ENCODE measurements at regions of chr19 and their contacts with region 1.

Region 1: DNA sequence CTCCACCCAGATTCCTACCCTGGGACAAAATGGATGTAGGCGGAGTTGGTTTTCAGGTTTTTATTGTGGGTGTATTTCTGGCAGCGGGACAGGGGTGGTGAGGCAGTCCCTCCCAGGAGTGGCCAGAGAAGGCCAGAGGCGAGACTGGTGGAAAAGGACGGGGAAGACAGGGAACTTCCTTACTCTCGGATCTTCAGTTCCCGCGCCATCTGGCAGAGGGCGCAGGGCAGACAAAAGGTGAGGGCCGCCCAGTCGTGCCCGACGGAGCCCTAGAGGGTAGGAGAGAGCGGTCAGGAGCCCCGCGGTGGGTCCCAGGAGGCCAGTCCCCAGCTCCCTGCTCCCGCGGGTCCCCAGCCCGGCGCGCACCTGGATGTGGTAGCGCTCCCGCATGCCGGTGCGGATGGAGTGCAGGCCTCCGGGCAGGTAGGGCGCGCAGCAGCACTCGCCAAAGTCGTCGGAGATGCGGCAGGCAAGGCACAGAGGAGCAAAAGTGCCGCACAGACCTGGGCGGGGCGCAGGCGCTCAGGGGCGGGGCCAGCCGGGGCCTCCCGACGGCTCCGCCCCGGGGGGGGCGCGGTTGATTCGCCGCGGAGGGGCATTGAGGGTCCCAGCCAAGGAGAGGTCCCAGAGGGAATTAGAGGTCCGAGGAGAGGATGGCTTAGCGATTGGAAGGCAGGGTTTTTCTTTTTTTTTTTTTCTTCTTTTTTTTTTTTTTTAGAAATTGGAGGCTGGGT is 3.0 kb downstream of the CNFN start:
- DNase-seq: peak; percentile 39 to 76 (median 69)
- ATAC-seq: peak; percentile 97
- H3K4me3 ChIP-seq: peak overlapping the region; percentile 31 to 58
- H3K4me3 Mint-ChIP-seq: peak overlapping the region; percentile 69
- H3K27ac ChIP-seq: no peak overlapping the region
- H3K27ac Mint-ChIP-seq: no peak overlapping the region
- H3K4me1 ChIP-seq: peaks cover 9% of the 10 kb centered on the region
- H3K4me1 Mint-ChIP-seq: peaks cover 6% of the 10 kb centered on the region
- H3K27me3 ChIP-seq: peaks cover 5 to 10% of the 10 kb centered on the region in 2 experiments
- H3K27me3 Mint-ChIP-seq: peaks cover 38% of the 10 kb centered on the region
- CTCF ChIP-seq: peak; percentile 42

Region 2: DNA sequence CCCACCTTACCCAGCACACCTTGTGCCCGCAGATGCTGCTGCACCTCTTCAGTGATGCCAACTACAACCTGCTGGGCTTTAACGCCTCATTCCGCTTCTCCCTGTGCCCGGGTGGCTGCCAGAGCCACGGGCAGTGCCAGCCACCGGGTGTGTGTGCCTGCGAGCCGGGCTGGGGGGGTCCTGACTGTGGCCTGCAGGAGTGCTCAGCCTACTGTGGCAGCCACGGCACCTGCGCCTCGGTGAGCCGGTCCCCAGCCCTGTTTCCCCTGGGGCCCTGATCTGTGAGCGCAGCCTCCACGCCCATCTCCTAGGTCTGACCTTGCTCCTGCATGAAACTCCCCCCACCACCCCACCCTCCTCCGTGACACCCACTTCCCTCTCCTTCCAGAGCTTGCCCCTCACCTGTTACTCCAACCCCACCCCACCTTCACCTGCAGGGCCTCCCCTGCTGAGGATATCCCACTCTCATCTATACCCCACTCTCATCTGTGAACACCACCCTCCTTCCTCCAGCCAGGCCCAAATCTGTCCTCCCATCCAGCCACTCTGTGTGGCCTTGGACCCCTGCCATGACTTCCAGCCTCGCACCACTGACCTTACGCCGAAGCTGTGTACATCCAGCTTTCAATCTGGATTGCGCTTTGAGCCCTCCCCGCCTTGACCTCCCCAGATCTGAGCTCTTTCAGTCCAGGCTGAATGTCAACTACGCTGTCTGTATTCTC is 53.0 kb before region 1 on chr19:
- CTCF ChIA-PET with region 1: no interaction called
- POLR2A ChIA-PET with region 1: no interaction called
- intact Hi-C with region 1: no loop called
- DNase-seq: no peak
- ATAC-seq: no peak
- H3K4me3 ChIP-seq: no peak overlapping the region
- H3K4me3 Mint-ChIP-seq: no peak overlapping the region
- H3K27ac ChIP-seq: no peak overlapping the region
- H3K27ac Mint-ChIP-seq: no peak overlapping the region
- H3K4me1 ChIP-seq: no peaks in the 10 kb centered on the region
- H3K4me1 Mint-ChIP-seq: no peaks in the 10 kb centered on the region
- H3K27me3 ChIP-seq: no peaks in the 10 kb centered on the region
- H3K27me3 Mint-ChIP-seq: no peaks in the 10 kb centered on the region
- CTCF ChIP-seq: no peak

Region 3: DNA sequence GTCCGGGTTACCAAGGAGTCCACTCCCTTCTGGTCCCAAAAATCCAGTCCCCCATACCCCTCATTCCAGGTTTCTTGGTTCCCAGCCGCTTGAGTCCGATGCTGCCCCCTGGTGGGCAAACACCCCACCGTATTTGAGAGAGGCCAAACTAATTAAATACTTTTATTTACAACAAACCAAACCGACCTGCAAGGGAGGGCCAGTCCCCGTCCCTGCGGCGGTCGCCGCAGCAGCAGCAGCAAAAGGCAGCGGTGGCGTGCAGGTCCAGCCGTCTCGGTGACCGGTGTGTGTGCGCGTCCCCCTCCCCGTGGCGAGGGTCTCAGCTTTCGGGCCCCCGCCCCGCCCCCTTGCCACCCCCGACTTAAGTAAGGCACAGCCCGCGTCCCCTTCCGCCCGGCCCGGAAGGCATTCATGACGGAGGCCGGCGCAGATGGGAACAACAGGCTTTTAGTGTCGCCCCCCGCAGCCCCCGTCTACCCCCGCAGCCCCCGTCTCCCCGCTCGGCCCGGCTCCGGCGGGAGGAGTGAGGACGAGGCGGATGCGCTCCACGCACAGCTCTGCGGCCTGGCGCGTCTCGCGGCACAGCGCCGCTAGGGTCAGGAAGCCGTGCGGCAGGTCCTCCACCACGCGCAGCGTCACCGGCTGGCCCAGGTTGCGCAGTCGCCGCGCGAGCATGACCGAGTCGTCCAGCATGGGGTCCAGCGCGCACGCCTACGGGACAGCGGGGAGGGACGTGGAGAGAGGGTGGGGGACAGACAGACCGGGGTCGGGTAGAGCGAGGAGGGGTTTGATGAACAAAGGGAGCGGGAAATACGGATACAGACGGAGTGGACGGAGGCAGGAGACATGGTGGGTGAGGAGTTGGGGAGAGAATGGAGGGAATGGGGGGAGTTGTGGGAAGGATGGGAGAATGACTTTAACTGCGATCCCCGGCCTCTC is 14.5 kb after region 1 on chr19:
- CTCF ChIA-PET with region 1: interaction called, 9 read pairs
- POLR2A ChIA-PET with region 1: no interaction called
- intact Hi-C with region 1: loop called (anchors 1 kb)
- DNase-seq: peak; percentile 56 to 86 (median 77)
- ATAC-seq: peak; percentile 71
- H3K4me3 ChIP-seq: peak overlapping the region; percentile 47 to 61
- H3K4me3 Mint-ChIP-seq: peak overlapping the region; percentile 85
- H3K27ac ChIP-seq: peak overlapping the region; percentile 25 to 46
- H3K27ac Mint-ChIP-seq: peak overlapping the region; percentile 88
- H3K4me1 ChIP-seq: peaks cover 18% of the 10 kb centered on the region
- H3K4me1 Mint-ChIP-seq: peaks cover 41% of the 10 kb centered on the region
- H3K27me3 ChIP-seq: no peaks in the 10 kb centered on the region
- H3K27me3 Mint-ChIP-seq: no peaks in the 10 kb centered on the region
- CTCF ChIP-seq: peak; percentile 79

Region 4: GRCh38 chr19:42433503-42434260 is 46.5 kb after region 1 on chr19:
- CTCF ChIA-PET with region 1: interaction called, 12 read pairs
- POLR2A ChIA-PET with region 1: interaction called, 3 read pairs
- intact Hi-C with region 1: loop called (anchors 1 to 2 kb)
- DNase-seq: peak; percentile 32 to 77 (median 66)
- ATAC-seq: peak; percentile 43
- H3K4me3 ChIP-seq: no peak overlapping the region
- H3K4me3 Mint-ChIP-seq: no peak overlapping the region
- H3K27ac ChIP-seq: no peak overlapping the region
- H3K27ac Mint-ChIP-seq: no peak overlapping the region
- H3K4me1 ChIP-seq: no peaks in the 10 kb centered on the region
- H3K4me1 Mint-ChIP-seq: peaks cover 4% of the 10 kb centered on the region
- H3K27me3 ChIP-seq: no peaks in the 10 kb centered on the region
- H3K27me3 Mint-ChIP-seq: no peaks in the 10 kb centered on the region
- CTCF ChIP-seq: peak; percentile 62